ENCODE measurements at regions of chr11 and their contacts with region 1.

Region 1: GRCh38 chr11:78645226-78646202 is 70.8 kb upstream of the NARS2 start:
- DNase-seq: peak; percentile 70
- H3K4me3 Mint-ChIP-seq: no peak overlapping the region
- H3K27ac Mint-ChIP-seq: no peak overlapping the region
- H3K4me1 Mint-ChIP-seq: peaks cover 23% of the 10 kb centered on the region
- H3K27me3 Mint-ChIP-seq: no peaks in the 10 kb centered on the region

Region 2: GRCh38 chr11:78188286-78189173 is 457.0 kb before region 1 on chr11 and contains the starts of genes KCTD21 and USP35:
- CTCF ChIA-PET with region 1: no interaction called
- intact Hi-C with region 1: no loop called
- DNase-seq: peak; percentile 93
- H3K4me3 Mint-ChIP-seq: peak within 1 kb of the TSS; percentile 99
- H3K27ac Mint-ChIP-seq: peak within 1 kb of the TSS; percentile 99
- H3K4me1 Mint-ChIP-seq: peaks cover 55% of the 10 kb centered on the region
- H3K27me3 Mint-ChIP-seq: no peaks in the 10 kb centered on the region
- total RNA-seq, gene KCTD21: 8.6 to 10.1 TPM
- total RNA-seq, gene USP35: 13.4 to 14.2 TPM

Region 3: DNA sequence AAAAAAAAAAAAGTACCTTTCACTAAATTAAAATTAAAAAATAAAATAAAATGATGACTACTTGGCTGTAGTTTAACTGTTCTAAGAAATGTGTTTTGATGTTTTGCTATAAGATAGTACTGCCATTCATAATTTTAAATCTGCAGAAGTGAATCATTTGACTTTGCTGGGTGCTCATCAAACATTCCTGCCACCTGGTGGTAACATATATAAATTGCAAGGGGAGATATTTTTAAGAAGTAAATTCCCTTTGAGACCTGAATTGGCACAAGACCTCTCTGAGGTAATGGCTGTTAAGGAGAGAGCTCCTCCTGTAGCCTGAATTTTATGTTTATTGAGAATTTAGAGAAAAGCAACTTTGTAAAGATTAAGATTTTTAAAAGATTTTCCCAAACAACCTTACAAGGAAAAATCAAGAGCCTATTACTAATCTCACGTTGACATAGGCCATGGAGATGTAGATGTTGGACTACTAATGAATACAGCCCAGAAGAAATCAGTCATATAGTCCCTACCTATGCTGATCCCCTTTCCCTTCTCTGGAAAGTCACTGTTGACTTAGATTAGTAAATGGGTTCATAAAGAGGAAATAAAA is 59.0 kb before region 1 on chr11:
- CTCF ChIA-PET with region 1: no interaction called
- intact Hi-C with region 1: no loop called
- DNase-seq: no peak
- H3K4me3 Mint-ChIP-seq: no peak overlapping the region
- H3K27ac Mint-ChIP-seq: no peak overlapping the region
- H3K4me1 Mint-ChIP-seq: no peaks in the 10 kb centered on the region
- H3K27me3 Mint-ChIP-seq: no peaks in the 10 kb centered on the region

Region 4: GRCh38 chr11:78699609-78700135 is 54.2 kb after region 1 on chr11:
- CTCF ChIA-PET with region 1: interaction called, 10 read pairs
- intact Hi-C with region 1: no loop called
- DNase-seq: no peak
- H3K4me3 Mint-ChIP-seq: no peak overlapping the region
- H3K27ac Mint-ChIP-seq: no peak overlapping the region
- H3K4me1 Mint-ChIP-seq: no peaks in the 10 kb centered on the region
- H3K27me3 Mint-ChIP-seq: peaks cover 12% of the 10 kb centered on the region

Region 5: DNA sequence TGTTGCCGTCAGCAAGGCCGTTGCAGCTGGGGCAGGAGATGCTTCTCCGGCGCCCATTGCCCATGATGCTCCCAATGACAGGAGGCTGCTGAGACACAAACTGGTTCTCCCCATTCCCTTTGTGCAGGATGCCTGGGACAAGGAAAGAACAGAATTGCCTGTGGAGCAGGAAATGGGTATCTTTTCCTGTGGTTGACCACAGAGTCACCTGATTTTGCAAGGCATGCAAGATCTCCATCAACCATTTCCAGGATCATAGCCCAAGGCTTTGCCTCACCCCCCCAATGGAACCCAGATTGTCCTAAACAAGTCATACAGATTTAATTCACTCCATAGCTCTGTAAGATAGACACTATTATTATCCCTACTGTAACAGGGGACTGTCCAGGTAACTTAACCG is 77.3 kb after region 1 on chr11:
- CTCF ChIA-PET with region 1: interaction called, 178 read pairs
- intact Hi-C with region 1: no loop called
- DNase-seq: no peak
- H3K4me3 Mint-ChIP-seq: no peak overlapping the region
- H3K27ac Mint-ChIP-seq: no peak overlapping the region
- H3K4me1 Mint-ChIP-seq: no peaks in the 10 kb centered on the region
- H3K27me3 Mint-ChIP-seq: peaks cover 8% of the 10 kb centered on the region

Region 6: GRCh38 chr11:78961247-78961646 is 315.7 kb after region 1 on chr11:
- CTCF ChIA-PET with region 1: interaction called, 5 read pairs
- intact Hi-C with region 1: loop called (anchors 10 kb)
- DNase-seq: no peak
- H3K4me3 Mint-ChIP-seq: no peak overlapping the region
- H3K27ac Mint-ChIP-seq: no peak overlapping the region
- H3K4me1 Mint-ChIP-seq: peaks cover 4% of the 10 kb centered on the region
- H3K27me3 Mint-ChIP-seq: peaks cover 37% of the 10 kb centered on the region

Region 7: GRCh38 chr11:79100093-79100910 is 454.8 kb after region 1 on chr11:
- CTCF ChIA-PET with region 1: interaction called, 16 read pairs
- intact Hi-C with region 1: loop called (anchors 1 kb)
- DNase-seq: peak; percentile 58
- H3K4me3 Mint-ChIP-seq: no peak overlapping the region
- H3K27ac Mint-ChIP-seq: no peak overlapping the region
- H3K4me1 Mint-ChIP-seq: no peaks in the 10 kb centered on the region
- H3K27me3 Mint-ChIP-seq: peaks cover 20% of the 10 kb centered on the region

Region 8: GRCh38 chr11:80155412-80156017 is 1510.0 kb after region 1 on chr11:
- CTCF ChIA-PET with region 1: no interaction called
- intact Hi-C with region 1: loop called (anchors 10 kb)
- DNase-seq: no peak
- H3K4me3 Mint-ChIP-seq: no peak overlapping the region
- H3K27ac Mint-ChIP-seq: no peak overlapping the region
- H3K4me1 Mint-ChIP-seq: no peaks in the 10 kb centered on the region
- H3K27me3 Mint-ChIP-seq: no peaks in the 10 kb centered on the region

Measured in activated naive CD4-positive, alpha-beta T cell treated with anti-CD3 and anti-CD28 coated beads for 36 hours (primary cell).